Cardiac septum (tissue), 1 donor: ENCODE measurements at regions of chr18 and their contacts with region 1.

Region 1: GRCh38 chr18:11310476-11311086 is 161.2 kb upstream of the PIEZO2 start:
- DNase-seq: no peak

Region 2: GRCh38 chr18:11387880-11388279 is 77.3 kb after region 1 on chr18:
- intact Hi-C with region 1: loop called (anchors 2 kb)
- DNase-seq: peak; percentile 80

Region 3: DNA sequence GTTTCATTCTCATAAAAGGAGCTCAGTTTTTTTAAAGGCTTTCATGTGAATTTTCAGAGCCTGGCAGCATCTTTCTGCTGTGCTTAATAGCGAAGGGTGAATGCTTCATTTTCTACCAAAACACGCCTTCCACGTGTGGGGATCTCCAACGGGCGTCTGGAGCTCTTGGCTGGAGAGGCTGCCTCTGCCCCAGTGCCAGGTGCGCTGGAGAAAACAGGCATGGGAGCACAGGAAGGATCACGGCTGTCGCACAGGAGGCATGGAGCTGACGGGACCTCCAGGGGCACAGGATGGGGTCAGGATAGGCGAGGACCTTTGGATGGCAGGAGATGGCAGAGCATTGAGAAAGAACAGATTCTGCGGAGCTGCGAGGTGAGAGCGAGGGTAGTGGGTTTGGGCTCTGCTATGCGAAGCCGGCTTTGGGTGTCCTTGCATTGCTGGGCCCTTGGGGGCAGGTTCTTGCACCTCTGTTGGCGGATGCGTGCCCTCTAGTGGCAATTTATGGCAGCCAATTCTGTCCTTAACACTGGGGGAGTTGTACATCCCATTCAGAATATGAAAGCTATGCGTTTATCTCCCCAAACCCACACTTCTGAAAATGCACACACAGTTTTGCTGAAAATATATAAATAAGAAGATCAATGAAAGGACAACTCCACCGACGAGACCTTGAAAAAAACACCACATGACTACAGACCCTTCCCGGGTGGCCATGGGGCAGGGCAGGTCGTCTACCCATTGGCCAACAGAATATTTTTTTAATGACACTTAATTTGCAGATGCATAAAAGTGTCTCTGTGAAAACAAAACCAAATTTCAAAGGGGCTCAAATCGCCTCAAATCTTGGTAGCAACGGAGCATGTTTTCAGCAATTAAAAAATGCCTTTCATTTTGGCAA is 208.5 kb after region 1 on chr18:
- intact Hi-C with region 1: no loop called
- DNase-seq: no peak

Region 4: DNA sequence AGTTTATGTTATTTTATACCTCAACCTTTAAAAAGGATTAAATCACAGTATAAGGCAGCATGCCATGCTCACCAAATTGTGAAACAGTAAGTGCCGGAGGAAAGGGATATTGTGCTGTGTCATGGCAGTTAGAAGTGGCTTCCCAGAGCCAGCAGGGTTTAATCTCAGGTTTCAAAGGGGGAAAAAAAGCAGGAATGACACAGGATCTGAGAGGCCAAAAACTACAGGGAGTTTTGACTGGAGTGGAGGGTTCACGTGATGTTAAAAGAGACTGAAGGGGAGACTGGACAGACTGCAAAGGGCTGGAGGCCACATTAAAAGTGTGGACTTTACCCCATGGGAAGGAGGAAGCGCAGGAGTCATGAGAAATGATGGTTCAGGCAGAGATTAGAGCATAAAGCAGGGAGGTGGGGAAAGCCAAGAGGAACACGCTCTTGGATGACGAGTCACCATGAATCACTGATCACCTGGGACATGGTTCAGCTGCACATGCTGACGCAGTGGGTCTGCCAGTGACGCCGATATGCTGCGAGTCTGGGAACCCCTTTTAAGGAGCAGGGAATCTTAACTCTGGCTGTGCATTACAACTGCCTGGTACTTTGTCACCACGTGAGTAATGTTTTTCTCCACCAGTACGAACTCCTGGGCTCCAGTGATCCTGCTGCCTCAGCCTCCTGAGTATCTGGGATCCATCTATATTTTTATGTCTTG is 546.8 kb after region 1 on chr18:
- intact Hi-C with region 1: no loop called
- DNase-seq: no peak